ENCODE measurements at regions of chr6 and their contacts with region 1.

Region 1: GRCh38 chr6:128389820-128390534 is 130.4 kb downstream of the PTPRK start:
- DNase-seq: no peak
- H3K4me3 ChIP-seq: no peak overlapping the region
- H3K27ac ChIP-seq: no peak overlapping the region
- H3K4me1 ChIP-seq: no peaks in the 10 kb centered on the region
- H3K27me3 ChIP-seq: no peaks in the 10 kb centered on the region
- CTCF ChIP-seq: no peak

Region 2: GRCh38 chr6:127807806-127808517 is 582.0 kb before region 1 on chr6:
- CTCF ChIA-PET with region 1: no interaction called
- POLR2A ChIA-PET with region 1: interaction called, 13 read pairs
- intact Hi-C with region 1: no loop called
- DNase-seq: no peak
- H3K4me3 ChIP-seq: no peak overlapping the region
- H3K27ac ChIP-seq: no peak overlapping the region
- H3K4me1 ChIP-seq: no peaks in the 10 kb centered on the region
- H3K27me3 ChIP-seq: no peaks in the 10 kb centered on the region
- CTCF ChIP-seq: no peak

Region 3: DNA sequence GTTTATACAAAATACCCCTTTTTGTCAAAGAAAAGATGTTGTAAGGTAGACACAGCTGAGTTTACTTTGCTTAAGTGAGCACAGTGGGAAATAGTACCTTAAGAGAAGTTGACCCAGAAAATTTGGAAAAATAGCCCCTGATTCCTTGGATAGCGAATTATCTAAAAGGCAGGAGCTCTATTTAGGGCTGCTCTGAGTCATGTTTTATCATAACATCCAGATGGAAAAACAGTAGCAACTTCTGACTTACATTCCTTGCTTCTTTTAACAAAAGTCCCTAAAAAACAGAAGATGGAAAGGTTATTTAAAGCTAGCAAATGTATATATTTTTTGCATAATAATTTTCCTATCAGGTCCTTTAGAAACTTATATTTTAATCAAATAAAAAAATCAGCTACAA is 548.2 kb before region 1 on chr6:
- CTCF ChIA-PET with region 1: no interaction called
- POLR2A ChIA-PET with region 1: no interaction called
- intact Hi-C with region 1: no loop called
- DNase-seq: no peak
- H3K4me3 ChIP-seq: no peak overlapping the region
- H3K27ac ChIP-seq: no peak overlapping the region
- H3K4me1 ChIP-seq: 0 out of 2 replicates have a peak, but pooled peaks cover under 1% of the 10 kb centered on the region
- H3K27me3 ChIP-seq: no peaks in the 10 kb centered on the region
- CTCF ChIP-seq: no peak